Caco-2 (cell line): ENCODE measurements at regions of chr2 and their contacts with region 1.

Region 1: DNA sequence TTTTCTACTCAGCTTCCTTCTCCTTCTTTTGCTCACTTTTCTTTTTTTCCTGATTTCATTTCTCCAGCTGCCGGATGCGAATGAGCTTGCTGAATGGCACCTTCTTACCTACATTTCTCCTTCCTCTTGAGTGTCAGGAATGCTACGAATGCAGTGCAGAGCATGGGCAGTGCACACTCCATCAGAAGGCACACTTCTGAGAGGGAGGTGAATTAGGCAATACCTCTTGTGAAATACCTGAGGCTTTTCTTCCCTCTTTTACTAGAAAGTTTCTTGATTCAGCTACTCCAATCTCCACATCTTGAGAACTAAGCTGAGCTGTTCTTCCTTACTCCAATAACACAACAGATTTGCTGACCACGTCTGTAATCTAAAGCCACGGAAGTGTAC is 51.1 kb downstream of the PLEKHM3 start:
- DNase-seq: peak; percentile 58 to 60
- H3K4me3 ChIP-seq: no peak overlapping the region
- H3K4me3 Mint-ChIP-seq: peak overlapping the region; percentile 8
- H3K27ac Mint-ChIP-seq: peak overlapping the region; percentile 29
- H3K4me1 ChIP-seq: peaks cover 38% of the 10 kb centered on the region
- H3K4me1 Mint-ChIP-seq: peaks cover 31% of the 10 kb centered on the region
- H3K27me3 ChIP-seq: no peaks in the 10 kb centered on the region
- H3K27me3 Mint-ChIP-seq: no peaks in the 10 kb centered on the region
- CTCF ChIP-seq: no peak

Region 2: DNA sequence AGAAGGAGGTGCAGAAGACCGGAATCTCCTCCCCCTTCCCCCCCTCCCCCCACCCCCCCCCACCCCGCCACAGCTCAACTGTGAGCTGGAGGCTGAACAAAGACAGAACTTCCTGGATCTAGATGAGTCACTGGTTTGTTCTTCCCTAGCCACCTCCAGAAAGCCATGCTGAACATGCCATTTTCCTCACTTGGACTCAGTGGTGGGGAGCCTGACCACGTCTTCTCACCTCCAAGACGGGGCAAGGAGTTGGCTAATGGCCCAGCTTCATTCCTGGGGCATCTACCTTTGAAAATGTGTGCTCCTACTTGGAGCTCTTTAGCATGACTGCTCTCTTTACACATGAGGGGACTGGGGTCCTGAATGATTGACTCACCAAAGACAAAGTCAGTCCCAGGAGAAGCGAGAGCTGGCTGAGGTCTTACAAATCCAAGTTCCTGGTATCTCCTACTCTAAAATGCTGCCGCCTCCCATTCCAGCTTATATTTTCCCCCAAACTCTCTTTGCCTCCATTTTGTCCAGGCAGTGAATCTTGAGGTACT is 181.9 kb before region 1 on chr2:
- CTCF ChIA-PET with region 1: interaction called, 6 read pairs
- POLR2A ChIA-PET with region 1: no interaction called
- intact Hi-C with region 1: loop called (anchors 1 kb)
- DNase-seq: peak; percentile 54 to 62
- H3K4me3 ChIP-seq: no peak overlapping the region
- H3K4me3 Mint-ChIP-seq: peak overlapping the region; percentile 34
- H3K27ac Mint-ChIP-seq: peak overlapping the region; percentile 93
- H3K4me1 ChIP-seq: peaks cover 44% of the 10 kb centered on the region
- H3K4me1 Mint-ChIP-seq: peaks cover 27% of the 10 kb centered on the region
- H3K27me3 ChIP-seq: no peaks in the 10 kb centered on the region
- H3K27me3 Mint-ChIP-seq: no peaks in the 10 kb centered on the region
- CTCF ChIP-seq: no peak

Region 3: GRCh38 chr2:207896525-207897295 is 77.5 kb before region 1 on chr2:
- CTCF ChIA-PET with region 1: interaction called, 4 read pairs
- POLR2A ChIA-PET with region 1: no interaction called
- intact Hi-C with region 1: loop called (anchors 5 kb)
- DNase-seq: peak; percentile 42 to 52
- H3K4me3 ChIP-seq: no peak overlapping the region
- H3K4me3 Mint-ChIP-seq: no peak overlapping the region
- H3K27ac Mint-ChIP-seq: no peak overlapping the region
- H3K4me1 ChIP-seq: peaks cover 35% of the 10 kb centered on the region
- H3K4me1 Mint-ChIP-seq: peaks cover 20% of the 10 kb centered on the region
- H3K27me3 ChIP-seq: no peaks in the 10 kb centered on the region
- H3K27me3 Mint-ChIP-seq: no peaks in the 10 kb centered on the region
- CTCF ChIP-seq: peak; percentile 39 to 44

Region 4: DNA sequence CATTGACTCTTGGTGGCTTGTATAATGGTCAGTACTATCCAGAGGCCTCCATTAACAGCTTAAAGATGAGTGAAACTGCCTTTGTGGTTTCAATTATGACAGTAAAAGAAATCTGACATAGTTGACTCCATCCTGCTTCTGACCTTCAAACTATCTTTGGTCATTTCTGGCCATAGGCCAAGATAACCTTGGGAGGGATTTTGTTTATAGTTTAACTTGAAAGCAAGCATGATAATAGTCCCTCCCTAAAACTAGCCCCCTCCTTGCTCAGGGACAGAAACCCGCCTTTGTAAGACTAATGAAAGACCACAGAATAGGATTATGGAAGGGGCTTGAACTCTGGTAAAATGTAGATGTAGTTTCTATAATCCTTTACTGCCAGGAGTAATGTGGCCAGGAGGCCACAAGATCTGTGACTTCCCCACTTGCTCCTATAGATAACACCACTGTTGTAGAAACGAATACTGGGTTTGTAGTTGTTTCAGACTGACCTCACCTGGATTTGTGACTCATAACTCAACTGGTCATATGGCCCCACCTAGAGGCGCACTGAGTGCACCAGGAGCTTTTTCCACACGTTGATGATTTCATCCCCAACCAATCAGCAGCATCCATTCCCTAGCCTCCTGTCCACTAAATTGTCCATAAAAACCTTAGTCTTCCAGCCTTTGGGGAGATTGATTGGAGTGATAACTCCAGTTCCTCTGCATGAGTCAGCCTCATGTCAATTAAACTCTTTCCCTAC is 59.7 kb after region 1 on chr2:
- CTCF ChIA-PET with region 1: no interaction called
- POLR2A ChIA-PET with region 1: no interaction called
- intact Hi-C with region 1: loop called (anchors 5 kb)
- DNase-seq: peak; percentile 82 to 85
- H3K4me3 ChIP-seq: no peak overlapping the region
- H3K4me3 Mint-ChIP-seq: no peak overlapping the region
- H3K27ac Mint-ChIP-seq: peak overlapping the region; percentile 70
- H3K4me1 ChIP-seq: peaks cover 51% of the 10 kb centered on the region
- H3K4me1 Mint-ChIP-seq: peaks cover 39% of the 10 kb centered on the region
- H3K27me3 ChIP-seq: no peaks in the 10 kb centered on the region
- H3K27me3 Mint-ChIP-seq: no peaks in the 10 kb centered on the region
- CTCF ChIP-seq: peak; percentile 36

Region 5: DNA sequence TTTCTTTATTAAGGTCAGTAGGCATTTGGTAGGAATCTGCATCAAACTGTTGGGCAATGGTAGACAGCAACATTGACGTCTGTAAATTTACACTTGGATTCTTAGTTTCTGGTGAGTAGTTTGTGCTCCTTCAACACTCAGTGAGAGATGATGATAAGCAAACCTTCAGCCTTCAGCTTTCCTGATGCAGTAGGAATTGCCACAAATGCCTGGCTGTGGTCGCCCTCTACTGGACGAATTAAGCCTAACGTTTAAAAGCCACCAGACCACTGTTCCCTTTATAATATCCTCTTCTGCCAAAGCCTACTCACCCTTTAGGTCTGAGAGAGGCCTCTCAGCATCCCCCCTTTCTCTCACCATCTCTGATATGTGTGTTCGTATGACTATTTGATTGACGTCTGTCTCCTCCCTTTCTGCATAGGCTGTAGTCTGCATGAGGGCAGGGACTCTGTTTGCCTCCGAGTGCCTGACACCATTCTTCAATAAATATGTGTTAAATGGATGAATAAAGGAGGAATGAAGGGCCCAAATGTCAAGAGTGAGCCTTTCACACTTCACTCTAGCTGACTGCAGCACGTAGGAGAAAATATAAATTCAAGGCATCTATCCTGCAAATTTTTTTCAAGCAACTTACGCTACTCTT is 98.2 kb after region 1 on chr2:
- CTCF ChIA-PET with region 1: no interaction called
- POLR2A ChIA-PET with region 1: no interaction called
- intact Hi-C with region 1: loop called (anchors 1 kb)
- DNase-seq: peak; percentile 73 to 83
- H3K4me3 ChIP-seq: no peak overlapping the region
- H3K4me3 Mint-ChIP-seq: no peak overlapping the region
- H3K27ac Mint-ChIP-seq: no peak overlapping the region
- H3K4me1 ChIP-seq: no peaks in the 10 kb centered on the region
- H3K4me1 Mint-ChIP-seq: peaks cover 3% of the 10 kb centered on the region
- H3K27me3 ChIP-seq: no peaks in the 10 kb centered on the region
- H3K27me3 Mint-ChIP-seq: no peaks in the 10 kb centered on the region
- CTCF ChIP-seq: peak; percentile 84

Region 6: DNA sequence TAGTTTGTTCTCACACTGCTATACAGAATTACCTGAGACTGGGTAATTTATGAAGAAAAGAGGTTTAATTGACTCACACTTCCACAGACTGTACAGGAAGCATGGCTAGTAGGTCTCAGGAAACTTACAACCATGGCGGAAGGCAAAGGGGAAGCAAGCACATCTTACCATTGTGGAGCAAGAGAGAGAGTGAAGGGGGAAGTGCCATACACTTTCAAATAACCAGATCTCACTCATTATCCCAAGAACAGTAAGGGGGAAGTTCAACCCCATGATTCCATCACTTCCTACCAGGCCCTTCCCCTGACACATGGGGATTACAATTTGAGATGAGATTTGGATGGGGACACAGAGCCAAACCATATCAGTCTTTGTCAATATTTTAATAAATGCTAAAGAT is 176.7 kb after region 1 on chr2:
- CTCF ChIA-PET with region 1: no interaction called
- POLR2A ChIA-PET with region 1: no interaction called
- intact Hi-C with region 1: no loop called
- DNase-seq: no peak
- H3K4me3 ChIP-seq: no peak overlapping the region
- H3K4me3 Mint-ChIP-seq: no peak overlapping the region
- H3K27ac Mint-ChIP-seq: no peak overlapping the region
- H3K4me1 ChIP-seq: no peaks in the 10 kb centered on the region
- H3K4me1 Mint-ChIP-seq: peaks cover 7% of the 10 kb centered on the region
- H3K27me3 ChIP-seq: no peaks in the 10 kb centered on the region
- H3K27me3 Mint-ChIP-seq: no peaks in the 10 kb centered on the region
- CTCF ChIP-seq: no peak